ENCODE measurements at regions of chr2 and their contacts with region 1.

Region 1: GRCh38 chr2:239035361-239036078 is 187.6 kb downstream of the TWIST2 start:
- DNase-seq: peak; percentile 69 to 77
- ATAC-seq: peak; percentile 79 to 98 (median 94)
- H3K4me3 ChIP-seq: no peak overlapping the region
- H3K4me3 Mint-ChIP-seq: no peak overlapping the region
- H3K27ac ChIP-seq: no peak overlapping the region
- H3K27ac Mint-ChIP-seq: no peak overlapping the region
- H3K4me1 ChIP-seq: peaks cover 3% of the 10 kb centered on the region
- H3K4me1 Mint-ChIP-seq: no peaks in the 10 kb centered on the region
- H3K27me3 ChIP-seq: peaks cover 2% of the 10 kb centered on the region
- H3K27me3 Mint-ChIP-seq: peaks cover 11 to 22% of the 10 kb centered on the region in 2 donors
- CTCF ChIP-seq: peak; percentile 89

Region 2: GRCh38 chr2:239106314-239106908 is 70.9 kb after region 1 on chr2:
- intact Hi-C with region 1: no loop called
- DNase-seq: no peak
- ATAC-seq: peak in 1 of 3 donors; percentile 43
- H3K4me3 ChIP-seq: no peak overlapping the region
- H3K4me3 Mint-ChIP-seq: no peak overlapping the region
- H3K27ac ChIP-seq: no peak overlapping the region
- H3K27ac Mint-ChIP-seq: no peak overlapping the region
- H3K4me1 ChIP-seq: no peaks in the 10 kb centered on the region
- H3K4me1 Mint-ChIP-seq: no peaks in the 10 kb centered on the region
- H3K27me3 ChIP-seq: no peaks in the 10 kb centered on the region
- H3K27me3 Mint-ChIP-seq: no peaks in the 10 kb centered on the region
- CTCF ChIP-seq: no peak

Region 3: GRCh38 chr2:239882331-239882732 is 846.8 kb after region 1 on chr2:
- intact Hi-C with region 1: loop called (anchors 1 kb)
- DNase-seq: peak; percentile 33 to 79
- ATAC-seq: peak in 2 of 3 donors; percentile 52 to 67
- H3K4me3 ChIP-seq: no peak overlapping the region
- H3K4me3 Mint-ChIP-seq: no peak overlapping the region
- H3K27ac ChIP-seq: no peak overlapping the region
- H3K27ac Mint-ChIP-seq: no peak overlapping the region
- H3K4me1 ChIP-seq: peaks cover 6% of the 10 kb centered on the region
- H3K4me1 Mint-ChIP-seq: no peaks in the 10 kb centered on the region
- H3K27me3 ChIP-seq: peaks cover 6% of the 10 kb centered on the region
- H3K27me3 Mint-ChIP-seq: peaks cover 25 to 28% of the 10 kb centered on the region in 2 donors
- CTCF ChIP-seq: peak; percentile 64

Region 4: DNA sequence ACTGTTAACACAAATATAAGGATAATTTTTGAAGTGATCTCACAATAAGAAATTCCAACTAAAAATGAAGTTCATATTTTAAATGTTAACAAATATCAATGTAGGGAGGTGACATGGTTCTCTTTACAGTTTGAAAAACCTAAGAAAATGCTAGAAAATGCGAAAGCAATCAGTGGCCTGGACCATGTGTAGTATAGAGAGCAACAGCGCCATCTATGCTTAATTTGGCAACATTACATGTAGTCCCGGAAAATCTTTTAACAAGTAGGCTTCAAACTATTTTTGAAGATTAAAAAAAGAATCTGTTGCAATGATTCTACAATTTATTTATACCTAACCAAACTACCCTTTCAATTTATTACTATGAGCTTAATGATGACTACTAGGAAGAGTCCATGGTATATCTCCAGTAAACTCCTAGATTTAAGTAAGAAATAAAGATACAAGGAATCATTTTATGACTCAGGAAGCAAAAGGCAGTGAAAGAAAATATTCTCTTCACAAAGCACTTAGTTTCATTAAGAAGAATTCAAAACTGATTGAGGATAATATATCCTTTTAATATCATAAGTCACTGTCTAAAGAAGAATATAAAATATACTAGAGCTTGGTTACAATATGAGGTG is 956.3 kb after region 1 on chr2:
- intact Hi-C with region 1: loop called (anchors 1 kb)
- DNase-seq: peak in 1 of 2 donors; percentile 71
- ATAC-seq: peak; percentile 60 to 76 (median 74)
- H3K4me3 ChIP-seq: no peak overlapping the region
- H3K4me3 Mint-ChIP-seq: no peak overlapping the region
- H3K27ac ChIP-seq: no peak overlapping the region
- H3K27ac Mint-ChIP-seq: no peak overlapping the region
- H3K4me1 ChIP-seq: no peaks in the 10 kb centered on the region
- H3K4me1 Mint-ChIP-seq: peaks cover 7 to 8% of the 10 kb centered on the region in 2 donors
- H3K27me3 ChIP-seq: no peaks in the 10 kb centered on the region
- H3K27me3 Mint-ChIP-seq: no peaks in the 10 kb centered on the region
- CTCF ChIP-seq: peak; percentile 98

Region 5: DNA sequence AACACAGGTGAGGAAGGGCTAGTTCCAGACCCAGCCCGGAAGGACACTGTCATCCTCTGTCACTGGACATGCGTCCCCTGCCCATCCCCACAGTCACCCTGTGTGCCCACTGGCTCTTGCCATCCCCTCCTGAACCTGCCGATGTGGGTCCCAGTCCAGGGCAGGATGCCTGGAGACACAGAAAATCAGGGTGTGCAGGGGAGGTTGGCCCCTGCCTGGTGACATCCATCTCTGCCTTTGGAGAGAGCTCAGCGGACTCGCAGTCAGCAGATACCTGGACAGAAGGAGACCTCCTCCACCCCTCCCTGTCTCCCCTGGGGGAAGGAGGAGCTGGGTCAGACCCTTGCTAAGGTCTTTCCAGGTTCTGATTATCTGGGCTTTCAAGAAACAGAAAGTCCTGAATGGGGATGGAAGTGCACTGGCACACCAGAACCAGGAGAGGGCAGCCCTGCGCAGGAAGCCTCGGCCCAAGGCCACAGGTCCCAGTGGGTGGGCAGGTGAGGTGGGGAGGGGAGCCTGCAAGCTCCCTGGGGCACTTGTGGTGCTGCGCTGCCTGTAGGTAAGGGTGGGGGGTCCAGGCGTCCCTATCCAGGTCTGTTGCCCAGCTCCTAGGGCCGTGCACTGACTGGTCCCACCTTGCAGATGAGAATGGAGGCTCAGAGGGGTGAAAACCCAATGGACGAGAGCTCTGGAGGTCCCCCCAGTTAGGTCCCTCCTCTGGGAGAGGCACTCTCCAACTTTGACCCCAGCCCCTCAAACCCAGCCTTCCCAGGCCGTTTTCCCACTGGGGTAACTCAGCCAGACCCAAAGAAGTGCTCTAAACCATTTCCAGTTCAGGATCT is 1114.6 kb after region 1 on chr2:
- intact Hi-C with region 1: loop called (anchors 5 kb)
- DNase-seq: peak in 1 of 2 donors; percentile 55
- ATAC-seq: peak in 2 of 3 donors; percentile 64 to 67
- H3K4me3 ChIP-seq: no peak overlapping the region
- H3K4me3 Mint-ChIP-seq: no peak overlapping the region
- H3K27ac ChIP-seq: no peak overlapping the region
- H3K27ac Mint-ChIP-seq: no peak overlapping the region
- H3K4me1 ChIP-seq: no peaks in the 10 kb centered on the region
- H3K4me1 Mint-ChIP-seq: peaks cover 0 to 8% of the 10 kb centered on the region in 2 donors
- H3K27me3 ChIP-seq: no peaks in the 10 kb centered on the region
- H3K27me3 Mint-ChIP-seq: peaks cover 0 to 4% of the 10 kb centered on the region in 2 donors
- CTCF ChIP-seq: peak; percentile 41